Activated CD8-positive, alpha-beta memory T cell treated with anti-CD3 and anti-CD28 coated beads, Interleukin-2, amount 10 ng/mL, durations not matched to agents 7 days and 5 days (primary cell): ENCODE measurements at regions of chr20 and their contacts with region 1.

Region 1: DNA sequence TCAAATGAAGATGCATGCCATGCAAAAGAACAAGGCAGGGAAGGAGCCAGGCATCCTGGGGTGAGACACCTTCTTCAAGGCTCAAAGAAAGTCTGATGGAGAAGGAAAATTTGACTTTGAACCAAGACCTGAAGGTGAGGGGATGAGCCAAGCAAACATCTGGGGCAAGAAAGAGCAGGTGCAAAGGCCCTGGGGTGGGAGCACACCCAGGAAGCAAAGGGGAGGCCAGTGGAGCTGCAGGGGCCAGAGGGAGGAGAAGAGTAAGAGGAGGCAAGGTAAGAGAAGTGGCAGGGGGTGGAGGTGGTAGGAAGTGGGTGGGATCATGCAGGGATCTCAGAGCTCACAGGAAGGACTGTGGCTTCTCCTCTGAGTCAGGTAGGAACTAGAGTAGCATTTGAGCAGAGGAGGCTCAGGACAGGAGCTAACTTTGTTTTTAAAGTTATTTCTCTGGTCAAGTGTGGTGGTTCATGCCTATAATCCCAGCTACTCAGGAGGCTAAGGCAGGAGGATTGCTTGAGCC is 49.6 kb downstream of the SLC13A3 start:
- DNase-seq: no peak
- ATAC-seq: peak; percentile 60
- H3K4me3 Mint-ChIP-seq: no peak overlapping the region
- H3K27ac Mint-ChIP-seq: peak overlapping the region; percentile 15
- H3K4me1 Mint-ChIP-seq: peaks cover 24% of the 10 kb centered on the region
- H3K27me3 Mint-ChIP-seq: peaks cover 11% of the 10 kb centered on the region

Region 2: DNA sequence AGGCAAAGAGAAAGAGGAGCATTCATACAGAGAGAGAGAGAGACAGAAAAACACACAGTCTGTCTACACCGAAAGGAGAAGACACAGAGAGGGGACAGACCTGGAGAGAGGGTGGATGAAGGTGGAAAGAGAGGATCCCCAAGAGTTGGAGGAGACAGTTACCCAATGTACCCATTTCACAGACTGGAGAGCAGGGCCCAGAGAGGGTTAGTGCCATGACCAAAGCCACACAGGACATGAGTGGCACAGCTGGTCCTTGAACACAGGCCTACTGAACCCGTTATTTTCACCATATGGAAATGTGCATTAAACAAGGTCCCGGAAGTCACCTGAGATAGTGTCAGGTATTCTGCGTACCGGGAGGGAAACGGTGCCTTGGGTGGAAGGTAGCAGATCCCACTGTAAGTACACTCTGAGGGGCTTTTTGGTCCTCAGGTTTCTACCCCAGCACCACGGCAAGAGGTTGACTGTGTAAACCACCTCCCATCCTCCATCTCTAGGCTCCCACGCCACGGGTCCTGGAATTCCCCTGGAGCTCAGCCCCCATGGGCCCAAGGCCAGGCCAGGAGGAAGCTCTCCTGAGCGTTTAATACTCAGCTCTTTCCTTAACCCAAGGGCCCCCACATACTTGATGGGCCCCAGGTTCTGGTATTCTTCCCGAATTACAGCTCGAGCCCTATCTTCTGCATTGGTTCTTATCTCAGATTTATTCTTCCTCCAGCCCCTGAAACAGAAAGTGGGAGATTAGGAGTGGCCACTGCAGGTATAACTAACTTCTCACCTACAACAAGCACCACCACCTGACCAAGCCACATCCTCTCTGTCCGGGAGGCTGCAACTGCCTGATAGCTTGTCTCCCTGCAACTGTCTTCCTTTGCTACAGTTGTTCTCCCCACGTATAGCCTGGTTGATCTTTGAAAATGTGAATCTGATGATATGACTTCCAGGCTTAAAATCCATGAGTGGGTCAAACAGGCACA is 12.8 kb before region 1 on chr20:
- CTCF ChIA-PET with region 1: interaction called, 14 read pairs
- DNase-seq: peak; percentile 79
- ATAC-seq: peak; percentile 91
- H3K4me3 Mint-ChIP-seq: no peak overlapping the region
- H3K27ac Mint-ChIP-seq: peak overlapping the region; percentile 72
- H3K4me1 Mint-ChIP-seq: peaks cover 7% of the 10 kb centered on the region
- H3K27me3 Mint-ChIP-seq: peaks cover 13% of the 10 kb centered on the region

Region 3: GRCh38 chr20:46720776-46721425 is 119.2 kb after region 1 on chr20:
- CTCF ChIA-PET with region 1: no interaction called
- DNase-seq: no peak
- ATAC-seq: no peak
- H3K4me3 Mint-ChIP-seq: no peak overlapping the region
- H3K27ac Mint-ChIP-seq: no peak overlapping the region
- H3K4me1 Mint-ChIP-seq: no peaks in the 10 kb centered on the region
- H3K27me3 Mint-ChIP-seq: no peaks in the 10 kb centered on the region